GM12878 (cell line): ENCODE measurements at regions of chr1 and their contacts with region 1.

Region 1: GRCh38 chr1:46062651-46063319 is 69.6 kb downstream of the PIK3R3 start:
- DNase-seq: peak; percentile 51
- ATAC-seq: peak; percentile 86
- H3K4me3 ChIP-seq: no peak overlapping the region
- H3K27ac ChIP-seq: peak overlapping the region; percentile 3
- H3K4me1 ChIP-seq: peaks cover 9% of the 10 kb centered on the region
- H3K27me3 ChIP-seq: no peaks in the 10 kb centered on the region
- CTCF ChIP-seq: no peak
- EP300 ChIP-seq: 0 out of 4 replicates have a peak, but pooled peaks of 1 of the 2 experiments have one; percentile 32
- POLR2A ChIP-seq: no peak
- RAD21 ChIP-seq: no peak

Region 2: GRCh38 chr1:46043458-46044017 is 19.2 kb before region 1 on chr1:
- CTCF ChIA-PET with region 1: interaction called, 10 read pairs
- POLR2A ChIA-PET with region 1: interaction called, 4 read pairs
- RAD21 ChIA-PET with region 1: interaction called, 20 read pairs
- SMC1A ChIA-PET with region 1: interaction called, 43 read pairs
- in situ Hi-C with region 1: no loop called
- intact Hi-C with region 1: no loop called
- DNase-seq: peak; percentile 92
- ATAC-seq: peak; percentile 97
- H3K4me3 ChIP-seq: no peak overlapping the region
- H3K27ac ChIP-seq: peak overlapping the region; percentile 80
- H3K4me1 ChIP-seq: peaks cover 35% of the 10 kb centered on the region
- H3K27me3 ChIP-seq: no peaks in the 10 kb centered on the region
- CTCF ChIP-seq: no peak
- EP300 ChIP-seq: peak in 1 of 2 experiments; percentile 54; a peak in 2 of 4 replicates
- POLR2A ChIP-seq: peak; percentile 52; the same call in 1 of the 2 replicates
- RAD21 ChIP-seq: no peak; the same call in 1 of the 2 replicates

Region 3: GRCh38 chr1:46081206-46081605 is 18.4 kb after region 1 on chr1:
- CTCF ChIA-PET with region 1: interaction called, 10 read pairs
- POLR2A ChIA-PET with region 1: interaction called, 3 read pairs
- RAD21 ChIA-PET with region 1: interaction called, 5 read pairs
- SMC1A ChIA-PET with region 1: interaction called, 7 read pairs
- in situ Hi-C with region 1: no loop called
- intact Hi-C with region 1: no loop called
- DNase-seq: no peak
- ATAC-seq: no peak
- H3K4me3 ChIP-seq: no peak overlapping the region
- H3K27ac ChIP-seq: no peak overlapping the region
- H3K4me1 ChIP-seq: no peaks in the 10 kb centered on the region
- H3K27me3 ChIP-seq: no peaks in the 10 kb centered on the region
- CTCF ChIP-seq: no peak
- EP300 ChIP-seq: no peak
- POLR2A ChIP-seq: no peak
- RAD21 ChIP-seq: no peak

Region 4: DNA sequence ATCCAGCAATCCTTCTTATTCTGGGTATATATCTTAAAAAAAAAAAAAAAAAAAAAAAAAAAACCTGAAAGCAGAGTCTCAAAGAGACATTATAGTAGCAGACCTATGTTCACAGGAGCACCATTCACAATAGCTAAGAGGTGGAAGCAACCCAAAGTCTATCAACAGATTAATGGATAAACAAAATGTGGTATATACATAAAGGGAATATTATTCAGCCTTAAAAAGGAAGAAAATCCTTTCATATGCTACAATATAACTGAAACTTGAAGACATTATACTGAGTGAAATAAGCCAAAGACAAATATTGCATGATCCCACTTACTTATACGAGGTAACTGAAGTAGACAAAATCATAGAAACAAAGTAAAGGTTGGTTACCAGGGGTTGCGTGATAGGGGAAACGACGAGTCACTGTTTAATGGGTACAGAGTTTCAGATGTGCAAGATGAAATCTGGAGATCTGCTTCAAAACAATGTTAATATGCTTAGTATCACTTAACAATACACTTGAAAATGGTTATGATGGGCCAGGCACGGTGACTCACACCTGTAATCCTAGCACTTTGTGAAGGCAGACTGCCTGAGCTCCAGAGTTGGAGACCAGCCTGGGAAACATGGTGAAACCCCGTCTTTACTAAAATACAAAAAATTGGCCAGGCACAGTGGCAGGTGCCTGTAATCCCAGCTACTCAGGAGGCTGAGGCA is 40.1 kb after region 1 on chr1:
- CTCF ChIA-PET with region 1: no interaction called
- POLR2A ChIA-PET with region 1: interaction called, 6 read pairs
- RAD21 ChIA-PET with region 1: interaction called, 4 read pairs
- SMC1A ChIA-PET with region 1: interaction called, 12 read pairs
- in situ Hi-C with region 1: no loop called
- intact Hi-C with region 1: no loop called
- DNase-seq: no peak
- ATAC-seq: no peak
- H3K4me3 ChIP-seq: no peak overlapping the region
- H3K27ac ChIP-seq: no peak overlapping the region
- H3K4me1 ChIP-seq: peaks cover 15% of the 10 kb centered on the region
- H3K27me3 ChIP-seq: no peaks in the 10 kb centered on the region
- CTCF ChIP-seq: no peak
- EP300 ChIP-seq: no peak
- POLR2A ChIP-seq: no peak
- RAD21 ChIP-seq: no peak

Region 5: GRCh38 chr1:46236882-46237281 is 174.1 kb after region 1 on chr1:
- CTCF ChIA-PET with region 1: no interaction called
- POLR2A ChIA-PET with region 1: no interaction called
- RAD21 ChIA-PET with region 1: no interaction called
- SMC1A ChIA-PET with region 1: no interaction called
- in situ Hi-C with region 1: no loop called
- intact Hi-C with region 1: no loop called
- DNase-seq: no peak
- ATAC-seq: no peak
- H3K4me3 ChIP-seq: no peak overlapping the region
- H3K27ac ChIP-seq: no peak overlapping the region
- H3K4me1 ChIP-seq: no peaks in the 10 kb centered on the region
- H3K27me3 ChIP-seq: no peaks in the 10 kb centered on the region
- CTCF ChIP-seq: no peak
- EP300 ChIP-seq: no peak
- POLR2A ChIP-seq: no peak
- RAD21 ChIP-seq: no peak